GM12878 (cell line): ENCODE measurements at regions of chr4 and their contacts with region 1.

Region 1: GRCh38 chr4:159206427-159206871 is 103.6 kb downstream of the RAPGEF2 start:
- DNase-seq: peak; percentile 83
- ATAC-seq: peak; percentile 84
- H3K4me3 ChIP-seq: no peak overlapping the region
- H3K27ac ChIP-seq: peak overlapping the region; percentile 60
- H3K4me1 ChIP-seq: peaks cover 27% of the 10 kb centered on the region
- H3K27me3 ChIP-seq: no peaks in the 10 kb centered on the region
- CTCF ChIP-seq: no peak
- EP300 ChIP-seq: no peak
- POLR2A ChIP-seq: no peak
- RAD21 ChIP-seq: no peak

Region 2: GRCh38 chr4:158253350-158253980 is 953.0 kb before region 1 on chr4:
- CTCF ChIA-PET with region 1: interaction called, 3 read pairs
- POLR2A ChIA-PET with region 1: no interaction called
- RAD21 ChIA-PET with region 1: no interaction called
- SMC1A ChIA-PET with region 1: no interaction called
- in situ Hi-C with region 1: loop called (anchors 25 kb)
- intact Hi-C with region 1: loop called (anchors 5 kb)
- DNase-seq: no peak
- ATAC-seq: peak; percentile 89
- H3K4me3 ChIP-seq: no peak overlapping the region
- H3K27ac ChIP-seq: no peak overlapping the region
- H3K4me1 ChIP-seq: no peaks in the 10 kb centered on the region
- H3K27me3 ChIP-seq: no peaks in the 10 kb centered on the region
- CTCF ChIP-seq: peak; percentile 50 to 72 (median 63); a peak in 5 of 6 replicates
- EP300 ChIP-seq: no peak
- POLR2A ChIP-seq: no peak
- RAD21 ChIP-seq: peak; percentile 67

Region 3: DNA sequence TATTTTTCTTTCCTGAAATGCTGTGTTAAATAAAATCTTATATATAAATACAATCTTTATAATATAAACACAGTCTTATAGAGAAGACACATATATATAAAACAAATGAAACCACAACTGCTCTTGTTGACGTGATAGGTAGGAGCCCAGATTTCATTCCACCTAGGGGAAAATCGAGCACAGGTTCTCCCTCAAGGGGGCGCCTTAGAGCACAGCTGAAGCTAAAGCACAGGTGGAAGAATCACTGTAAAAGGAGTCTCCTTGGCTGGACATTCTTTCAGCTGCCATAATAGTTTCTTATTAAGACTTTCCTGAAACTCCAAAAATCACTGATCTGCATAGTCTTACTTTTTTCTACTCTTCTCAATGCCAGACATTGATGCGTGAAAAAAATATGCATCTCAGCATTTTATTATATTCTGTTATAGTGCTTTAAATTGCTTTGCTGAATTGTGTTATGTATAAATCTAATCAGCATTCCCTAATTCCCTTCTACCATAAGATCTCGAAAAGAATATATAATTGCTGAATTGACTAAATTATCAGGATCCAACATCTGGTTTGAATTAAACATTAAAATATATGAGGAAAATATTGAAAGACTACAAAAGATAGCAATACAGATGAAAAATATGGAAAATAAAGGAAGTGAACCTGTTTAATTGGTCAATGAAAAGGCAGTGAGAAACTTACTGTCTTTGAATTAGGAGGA is 710.3 kb before region 1 on chr4:
- CTCF ChIA-PET with region 1: interaction called, 8 read pairs
- POLR2A ChIA-PET with region 1: no interaction called
- RAD21 ChIA-PET with region 1: interaction called, 7 read pairs
- SMC1A ChIA-PET with region 1: no interaction called
- in situ Hi-C with region 1: no loop called
- intact Hi-C with region 1: loop called (anchors 10 kb)
- DNase-seq: no peak
- ATAC-seq: peak; percentile 59
- H3K4me3 ChIP-seq: no peak overlapping the region
- H3K27ac ChIP-seq: no peak overlapping the region
- H3K4me1 ChIP-seq: no peaks in the 10 kb centered on the region
- H3K27me3 ChIP-seq: no peaks in the 10 kb centered on the region; a peak in 1 of 4 replicates
- CTCF ChIP-seq: peak; percentile 47 to 72 (median 53); a peak in 5 of 6 replicates
- EP300 ChIP-seq: no peak
- POLR2A ChIP-seq: no peak
- RAD21 ChIP-seq: peak; percentile 39

Region 4: GRCh38 chr4:158710814-158711213 is 495.6 kb before region 1 on chr4:
- CTCF ChIA-PET with region 1: interaction called, 13 read pairs
- POLR2A ChIA-PET with region 1: no interaction called
- RAD21 ChIA-PET with region 1: no interaction called
- SMC1A ChIA-PET with region 1: interaction called, 5 read pairs
- in situ Hi-C with region 1: no loop called
- intact Hi-C with region 1: no loop called
- DNase-seq: no peak
- ATAC-seq: no peak; the same call in 2 of the 3 replicates
- H3K4me3 ChIP-seq: no peak overlapping the region
- H3K27ac ChIP-seq: no peak overlapping the region
- H3K4me1 ChIP-seq: no peaks in the 10 kb centered on the region
- H3K27me3 ChIP-seq: no peaks in the 10 kb centered on the region
- CTCF ChIP-seq: peak in 2 of 3 experiments; percentile 7 to 24; a peak in 1 of 6 replicates
- EP300 ChIP-seq: no peak
- POLR2A ChIP-seq: no peak
- RAD21 ChIP-seq: 0 out of 2 replicates have a peak, but pooled peaks have one; percentile 7

Region 5: GRCh38 chr4:158856852-158857251 is 349.6 kb before region 1 on chr4:
- CTCF ChIA-PET with region 1: interaction called, 153 read pairs
- POLR2A ChIA-PET with region 1: interaction called, 3 read pairs
- RAD21 ChIA-PET with region 1: interaction called, 25 read pairs
- SMC1A ChIA-PET with region 1: interaction called, 78 read pairs
- in situ Hi-C with region 1: loop called (anchors 5 kb)
- intact Hi-C with region 1: loop called (anchors 1 kb)
- DNase-seq: no peak
- ATAC-seq: peak; percentile 78
- H3K4me3 ChIP-seq: no peak overlapping the region
- H3K27ac ChIP-seq: no peak overlapping the region
- H3K4me1 ChIP-seq: peaks cover 8% of the 10 kb centered on the region
- H3K27me3 ChIP-seq: no peaks in the 10 kb centered on the region
- CTCF ChIP-seq: peak; percentile 51 to 71 (median 52); a peak in 5 of 6 replicates
- EP300 ChIP-seq: no peak
- POLR2A ChIP-seq: no peak
- RAD21 ChIP-seq: peak; percentile 93

Region 6: GRCh38 chr4:159160242-159160641 is 46.2 kb before region 1 on chr4:
- CTCF ChIA-PET with region 1: no interaction called
- POLR2A ChIA-PET with region 1: no interaction called
- RAD21 ChIA-PET with region 1: no interaction called
- SMC1A ChIA-PET with region 1: no interaction called
- in situ Hi-C with region 1: no loop called
- intact Hi-C with region 1: no loop called
- DNase-seq: no peak
- ATAC-seq: no peak
- H3K4me3 ChIP-seq: no peak overlapping the region
- H3K27ac ChIP-seq: no peak overlapping the region
- H3K4me1 ChIP-seq: no peaks in the 10 kb centered on the region; the same call in 1 of the 2 replicates
- H3K27me3 ChIP-seq: no peaks in the 10 kb centered on the region
- CTCF ChIP-seq: no peak
- EP300 ChIP-seq: no peak
- POLR2A ChIP-seq: no peak
- RAD21 ChIP-seq: no peak

Region 7: DNA sequence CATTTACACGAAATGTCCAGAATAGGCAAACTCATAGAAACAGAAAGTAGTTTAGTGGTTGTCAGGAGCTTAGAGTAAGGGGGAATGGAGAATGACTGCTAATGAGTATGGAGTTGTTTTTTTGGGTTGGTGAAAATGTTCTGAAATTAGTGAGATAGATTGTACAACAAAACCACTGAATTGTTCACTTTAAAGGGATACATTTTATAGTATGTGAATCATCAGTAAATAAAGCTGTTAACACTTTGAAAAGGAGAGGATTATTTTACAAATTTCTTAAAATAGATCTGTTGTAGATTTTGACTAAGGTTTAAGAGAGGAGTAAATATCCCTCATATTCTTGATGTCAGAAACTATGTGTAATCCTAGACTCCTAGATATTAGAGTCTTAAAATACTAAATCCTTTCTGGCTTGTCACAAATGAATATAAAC is 20.8 kb before region 1 on chr4:
- CTCF ChIA-PET with region 1: interaction called, 12 read pairs
- POLR2A ChIA-PET with region 1: no interaction called
- RAD21 ChIA-PET with region 1: interaction called, 3 read pairs
- SMC1A ChIA-PET with region 1: interaction called, 3 read pairs
- in situ Hi-C with region 1: no loop called
- intact Hi-C with region 1: no loop called
- DNase-seq: no peak
- ATAC-seq: peak; percentile 66
- H3K4me3 ChIP-seq: no peak overlapping the region
- H3K27ac ChIP-seq: no peak overlapping the region
- H3K4me1 ChIP-seq: no peaks in the 10 kb centered on the region
- H3K27me3 ChIP-seq: no peaks in the 10 kb centered on the region
- CTCF ChIP-seq: no peak
- EP300 ChIP-seq: no peak
- POLR2A ChIP-seq: no peak
- RAD21 ChIP-seq: no peak